ENCODE measurements at regions of chr19 and their contacts with region 1.

Region 1: GRCh38 chr19:53879140-53880081 is 2.6 kb upstream of the PRKCG start:
- DNase-seq: peak; percentile 64 to 87 (median 76)
- ATAC-seq: peak; percentile 63 to 72
- H3K4me3 Mint-ChIP-seq: no peak overlapping the region
- H3K27ac Mint-ChIP-seq: peak overlapping the region in 5 of 10 donors; percentile 43 to 78 (median 71)
- H3K4me1 Mint-ChIP-seq: peaks cover 27 to 57% (median 51%) of the 10 kb centered on the region in 4 donors
- H3K27me3 Mint-ChIP-seq: peaks cover 5 to 21% (median 11%) of the 10 kb centered on the region in 5 donors

Region 2: DNA sequence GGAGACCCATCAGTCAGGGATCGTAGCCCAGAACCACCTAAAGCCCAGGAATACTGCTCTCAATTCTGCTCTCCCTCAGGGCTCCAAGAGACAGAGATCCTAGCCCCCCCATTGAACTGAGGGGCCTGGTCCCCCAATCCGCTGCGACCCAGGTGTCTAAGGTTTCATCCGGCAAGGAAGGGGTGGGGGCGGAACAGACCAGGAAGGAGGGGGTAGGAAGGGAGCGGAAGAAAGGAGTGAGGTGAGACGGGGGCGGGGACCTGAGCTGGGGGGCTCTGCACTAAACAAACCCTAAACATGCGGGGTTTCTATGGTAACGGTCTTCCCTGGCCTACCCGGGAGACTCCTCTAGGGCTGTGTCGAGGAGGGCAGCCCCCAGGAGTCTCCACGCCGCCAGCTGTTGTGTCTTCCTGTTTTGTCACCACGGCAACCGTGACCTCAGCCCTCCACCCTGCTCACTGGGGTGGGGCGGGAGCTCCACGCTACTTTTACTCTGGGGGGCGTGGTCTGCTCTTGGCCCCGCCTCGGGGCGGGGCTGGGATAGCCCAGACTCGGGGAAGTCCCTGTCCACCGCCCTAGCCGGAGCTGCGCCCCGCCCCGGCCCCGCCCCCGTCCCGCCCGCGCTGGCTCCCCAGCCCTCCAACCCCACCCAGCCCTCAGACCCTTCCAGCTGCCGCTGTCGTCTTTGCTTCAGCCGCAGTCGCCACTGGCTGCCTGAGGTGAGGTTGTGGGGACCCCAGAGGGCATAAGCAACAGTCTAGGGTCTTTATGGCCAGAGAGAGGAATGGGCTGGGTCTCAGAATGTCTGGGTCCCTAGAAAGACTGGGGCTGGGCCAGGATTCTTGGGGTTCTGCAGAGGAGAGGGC is 12.0 kb before region 1 on chr19 and contains the start of gene MYADM:
- POLR2A ChIA-PET with region 1: interaction called, 57 read pairs
- DNase-seq: peak; percentile 98 to 100 (median 100)
- ATAC-seq: peak; percentile 45 to 72
- H3K4me3 Mint-ChIP-seq: peak within 1 kb of the TSS; percentile 90 to 99 (median 96)
- H3K27ac Mint-ChIP-seq: peak within 1 kb of the TSS; percentile 94 to 100 (median 100)
- H3K4me1 Mint-ChIP-seq: peaks cover 21 to 56% (median 43%) of the 10 kb centered on the region in 4 donors
- H3K27me3 Mint-ChIP-seq: peaks cover 0 to 1% (median 0%) of the 10 kb centered on the region in 5 donors
- polyA plus RNA-seq, gene MYADM: 33.9 to 42.0 (median 40.3) TPM

Measured in naive thymus-derived CD8-positive, alpha-beta T cell (primary cell).